Activated CD4-positive, alpha-beta T cell treated with anti-CD3 and anti-CD28 coated beads, Interleukin-2, amount 10 ng/mL, durations not matched to agents 24 days and 14 days (primary cell): ENCODE measurements at regions of chr4 and their contacts with region 1.

Region 1: GRCh38 chr4:139177868-139178611 is 1.0 kb upstream of the ELF2 start:
- DNase-seq: peak; percentile 100
- H3K4me3 Mint-ChIP-seq: peak overlapping the region; percentile 94
- H3K27ac Mint-ChIP-seq: peak overlapping the region; percentile 97
- H3K4me1 Mint-ChIP-seq: peaks cover 28% of the 10 kb centered on the region
- H3K27me3 Mint-ChIP-seq: peaks cover 29% of the 10 kb centered on the region

Region 2: DNA sequence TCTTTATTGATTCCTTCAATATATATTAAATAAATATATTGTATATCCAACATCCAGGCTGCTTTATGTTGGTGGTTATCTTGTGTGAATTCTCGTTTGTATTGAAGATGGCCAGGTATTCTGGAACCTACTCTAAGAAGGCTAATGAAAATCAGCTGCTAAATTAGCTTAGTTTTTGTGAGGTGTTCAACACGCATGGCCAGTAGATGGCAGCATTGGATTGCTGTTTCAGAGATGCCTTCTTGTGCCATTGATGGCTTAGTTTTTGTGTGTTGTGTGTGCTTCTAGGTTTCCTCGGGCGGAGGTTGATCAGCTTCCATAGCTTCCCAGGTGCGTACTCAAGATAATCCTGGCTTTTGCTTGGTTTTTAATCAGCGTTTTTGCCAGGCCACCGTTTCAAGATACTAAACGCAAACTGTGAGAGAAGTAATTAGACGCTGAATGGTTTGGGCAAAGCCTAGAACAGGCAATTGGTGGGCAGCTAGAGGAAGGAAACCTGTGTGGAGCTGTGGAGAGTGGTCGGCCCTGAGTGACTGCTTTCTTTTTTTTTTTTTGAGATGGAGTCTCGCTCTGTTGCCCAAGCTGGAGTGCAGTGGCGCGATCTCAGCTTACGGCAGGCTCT is 147.3 kb before region 1 on chr4:
- intact Hi-C with region 1: loop called (anchors 5 kb)
- DNase-seq: peak; percentile 93
- H3K4me3 Mint-ChIP-seq: no peak overlapping the region
- H3K27ac Mint-ChIP-seq: no peak overlapping the region
- H3K4me1 Mint-ChIP-seq: peaks cover 13% of the 10 kb centered on the region
- H3K27me3 Mint-ChIP-seq: no peaks in the 10 kb centered on the region

Region 3: DNA sequence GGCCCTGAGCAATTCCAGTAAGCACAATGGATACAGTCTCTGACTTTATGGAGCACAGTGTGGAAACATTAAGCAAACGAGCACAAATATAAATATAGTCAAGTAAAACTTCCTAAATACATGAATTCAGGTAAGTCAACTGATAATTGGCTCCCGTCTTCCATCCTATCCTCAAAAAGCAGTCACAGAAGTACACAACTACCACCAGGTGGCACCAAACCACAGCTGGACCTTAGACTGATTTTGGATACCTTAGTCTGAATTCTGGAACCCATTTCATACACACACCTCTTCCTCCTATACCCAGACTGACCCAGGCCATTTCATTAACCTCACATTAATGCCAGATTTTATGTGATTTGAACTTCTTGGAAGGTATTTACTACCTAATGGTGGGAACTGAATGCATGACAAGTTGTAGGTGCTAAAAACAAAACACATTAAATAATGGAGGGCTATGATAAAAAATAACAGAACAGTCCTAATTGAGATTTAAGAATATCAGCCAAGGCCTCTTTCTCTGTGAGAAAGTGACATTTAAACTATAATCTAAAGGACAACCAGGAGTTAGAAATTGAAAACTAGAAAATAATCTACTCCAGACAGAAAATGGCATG is 78.6 kb before region 1 on chr4:
- intact Hi-C with region 1: loop called (anchors 2 kb)
- DNase-seq: peak; percentile 90
- H3K4me3 Mint-ChIP-seq: no peak overlapping the region
- H3K27ac Mint-ChIP-seq: no peak overlapping the region
- H3K4me1 Mint-ChIP-seq: peaks cover 4% of the 10 kb centered on the region
- H3K27me3 Mint-ChIP-seq: no peaks in the 10 kb centered on the region

Region 4: GRCh38 chr4:139266583-139267257 is 88.7 kb after region 1 on chr4:
- intact Hi-C with region 1: loop called (anchors 1 kb)
- DNase-seq: peak; percentile 90
- H3K4me3 Mint-ChIP-seq: peak overlapping the region; percentile 68
- H3K27ac Mint-ChIP-seq: peak overlapping the region; percentile 78
- H3K4me1 Mint-ChIP-seq: peaks cover 21% of the 10 kb centered on the region
- H3K27me3 Mint-ChIP-seq: peaks cover 18% of the 10 kb centered on the region

Region 5: DNA sequence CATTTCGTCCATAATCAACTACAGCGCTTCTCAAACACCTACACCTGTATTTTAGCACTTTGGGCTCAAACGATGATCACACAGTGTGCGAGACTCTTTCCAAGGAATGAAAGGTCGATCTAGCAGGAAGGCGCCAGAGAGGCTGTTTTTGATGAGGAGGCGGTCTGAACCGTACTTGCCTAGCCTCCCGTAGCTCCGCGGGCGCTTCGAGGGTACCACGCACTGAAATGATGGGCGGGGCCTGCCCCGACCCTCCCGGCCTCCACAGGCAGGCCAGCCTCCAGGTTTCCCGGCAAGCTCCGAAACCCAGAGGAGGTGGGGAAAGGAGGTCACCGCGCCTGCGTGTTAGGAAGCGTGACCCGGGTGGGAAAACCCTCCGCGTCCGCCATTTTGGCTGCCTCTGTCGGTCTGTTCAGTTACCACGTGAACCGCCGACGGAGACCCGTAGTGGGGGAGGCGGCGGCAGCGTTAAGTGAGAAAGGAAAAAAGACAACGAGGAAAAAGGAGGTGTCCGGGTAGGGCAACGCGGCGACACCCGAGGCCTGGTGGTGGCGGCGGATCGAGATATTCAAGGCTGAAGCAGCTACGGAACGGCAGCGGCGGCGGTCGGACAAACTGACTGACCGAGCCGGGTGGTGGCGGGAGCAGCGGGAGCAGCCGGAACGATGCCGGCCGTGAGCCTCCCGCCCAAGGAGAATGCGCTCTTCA is 123.2 kb after region 1 on chr4 and contains the start of gene NAA15:
- intact Hi-C with region 1: loop called (anchors 1 kb)
- DNase-seq: peak; percentile 99
- H3K4me3 Mint-ChIP-seq: peak within 1 kb of the TSS; percentile 99
- H3K27ac Mint-ChIP-seq: peak within 1 kb of the TSS; percentile 100
- H3K4me1 Mint-ChIP-seq: peaks cover 52% of the 10 kb centered on the region
- H3K27me3 Mint-ChIP-seq: no peaks in the 10 kb centered on the region
- total RNA-seq, gene NAA15: 114 and 115 TPM in 2 replicates

Region 6: DNA sequence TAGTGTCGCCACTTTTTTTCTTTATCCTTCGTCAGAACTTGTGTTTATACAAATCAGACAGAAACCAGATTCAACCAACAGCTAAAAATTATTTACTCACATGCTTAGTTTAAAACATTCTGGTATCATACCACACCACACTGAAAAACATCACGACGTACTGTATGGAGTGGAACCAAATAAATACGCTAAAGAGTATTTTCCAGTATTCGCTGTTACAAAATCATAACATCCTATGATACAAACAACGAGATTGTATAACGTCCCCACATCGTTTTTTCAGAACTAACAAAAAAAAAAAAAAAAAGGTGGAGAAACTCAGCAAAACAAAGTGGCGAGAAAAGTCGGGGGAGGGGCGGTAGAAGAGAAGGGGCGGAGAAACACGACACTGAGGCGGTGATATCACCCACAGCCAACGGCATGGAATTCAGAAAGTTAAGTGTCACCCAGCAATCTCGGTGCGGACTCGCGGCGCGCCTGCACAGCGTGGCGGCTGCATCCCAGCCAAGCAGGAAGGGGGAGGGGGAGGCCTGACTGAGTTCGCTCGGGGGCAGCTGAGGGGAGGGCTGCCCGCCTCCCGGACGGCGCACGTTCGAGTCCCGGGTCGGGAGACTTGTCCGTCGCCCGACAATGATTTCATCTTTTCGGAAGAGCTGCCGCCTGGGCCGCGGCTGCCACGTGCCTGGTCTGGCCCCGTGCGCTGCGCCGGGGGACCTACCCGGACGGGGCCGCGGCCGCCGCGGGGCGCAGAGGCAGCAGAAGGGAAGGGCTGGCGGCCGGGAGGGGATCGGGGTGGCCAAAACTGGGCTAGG is 377.1 kb after region 1 on chr4:
- intact Hi-C with region 1: loop called (anchors 2 kb)
- DNase-seq: peak; percentile 95
- H3K4me3 Mint-ChIP-seq: peak overlapping the region; percentile 89
- H3K27ac Mint-ChIP-seq: peak overlapping the region; percentile 97
- H3K4me1 Mint-ChIP-seq: peaks cover 38% of the 10 kb centered on the region
- H3K27me3 Mint-ChIP-seq: peaks cover 7% of the 10 kb centered on the region

Region 7: DNA sequence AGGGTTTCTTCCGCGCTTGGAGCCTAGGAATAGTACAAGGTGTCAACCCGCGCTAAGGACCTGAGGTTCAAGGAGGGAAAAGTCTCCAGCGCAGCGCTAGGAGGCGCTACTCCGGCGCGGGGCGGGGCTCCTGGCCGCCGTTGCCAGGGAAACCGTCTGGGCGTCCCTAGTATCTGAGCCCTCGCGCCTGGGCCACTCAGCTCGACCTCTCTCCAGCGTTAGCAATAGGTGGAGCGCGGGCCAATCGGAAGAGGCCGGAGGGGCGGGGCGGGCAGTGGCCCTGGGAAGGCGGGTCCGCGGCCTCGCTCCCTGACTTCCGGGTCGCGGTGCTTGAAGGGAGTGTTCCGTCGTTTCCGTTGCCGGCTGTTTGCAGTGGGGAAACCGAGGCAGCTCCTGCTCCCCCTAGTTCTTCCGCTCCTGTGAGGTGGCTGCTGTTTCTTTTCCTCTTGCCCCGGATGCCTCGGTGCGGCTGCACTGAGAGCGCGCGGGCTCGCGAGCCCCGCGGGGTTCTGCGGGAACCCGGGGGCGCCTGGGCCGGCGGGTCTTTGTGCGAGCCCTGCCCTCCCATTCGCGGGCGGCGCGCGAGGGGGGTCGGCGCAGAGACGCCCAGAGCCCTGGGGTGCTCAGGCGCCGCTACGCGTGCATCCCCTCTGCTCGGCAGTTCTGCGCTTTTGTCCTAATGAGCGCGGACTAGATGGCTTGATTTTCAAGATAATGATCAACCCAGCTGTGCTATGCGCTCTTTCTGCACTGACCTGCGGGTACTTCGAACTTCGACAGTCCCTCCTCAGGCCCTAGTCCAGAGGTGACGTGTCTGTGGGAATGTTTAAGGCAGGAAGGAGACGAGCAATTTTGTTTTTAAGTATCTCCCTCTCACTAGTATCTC is 1346.1 kb after region 1 on chr4 and contains the start of gene ELMOD2:
- intact Hi-C with region 1: loop called (anchors 10 kb)
- DNase-seq: peak; percentile 99
- H3K4me3 Mint-ChIP-seq: peak within 1 kb of the TSS; percentile 85
- H3K27ac Mint-ChIP-seq: peak within 1 kb of the TSS; percentile 34
- H3K4me1 Mint-ChIP-seq: peaks cover 16% of the 10 kb centered on the region
- H3K27me3 Mint-ChIP-seq: peaks cover 1% of the 10 kb centered on the region
- total RNA-seq, gene ELMOD2: 10.5 and 12.3 TPM in 2 replicates